ENCODE measurements at regions of chr2 and their contacts with region 1.

Region 1: GRCh38 chr2:32772638-32773447 is 145.0 kb downstream of the TTC27 start:
- DNase-seq: no peak
- ATAC-seq: peak; percentile 72 to 75

Region 2: DNA sequence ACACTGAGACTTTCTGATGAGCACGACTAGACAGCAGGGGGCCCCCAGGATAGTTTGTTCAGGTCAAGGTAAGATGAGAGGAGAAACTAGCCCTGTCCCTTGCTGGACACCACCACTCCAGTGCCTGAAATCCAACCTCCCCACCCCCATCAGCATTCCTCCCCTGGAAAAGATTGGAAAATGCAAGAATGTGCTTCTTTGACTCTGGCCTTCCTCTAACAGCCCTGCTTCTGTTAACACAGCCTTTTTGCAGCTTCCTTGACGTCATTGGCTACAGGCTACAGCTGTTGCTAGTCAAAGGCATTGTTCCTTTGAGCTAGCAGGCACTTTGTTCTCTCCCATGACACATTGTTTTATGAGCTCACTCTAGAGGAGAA is 153.9 kb after region 1 on chr2:
- intact Hi-C with region 1: no loop called
- DNase-seq: no peak
- ATAC-seq: peak in 1 of 2 donors; percentile 44

Region 3: GRCh38 chr2:32946314-32947075 is 173.7 kb after region 1 on chr2 and contains the start of gene LTBP1:
- intact Hi-C with region 1: loop called (anchors 5 kb)
- DNase-seq: peak; percentile 84
- ATAC-seq: peak; percentile 87 to 89
- total RNA-seq, gene LTBP1: 121 to 160 TPM

Region 4: GRCh38 chr2:33033606-33034081 is 260.8 kb after region 1 on chr2:
- intact Hi-C with region 1: loop called (anchors 2 to 10 kb)
- DNase-seq: no peak
- ATAC-seq: peak; percentile 59 to 67

Region 5: GRCh38 chr2:33177627-33178026 is 404.8 kb after region 1 on chr2:
- intact Hi-C with region 1: no loop called
- DNase-seq: no peak
- ATAC-seq: no peak

Region 6: GRCh38 chr2:33275689-33276444 is 503.0 kb after region 1 on chr2:
- intact Hi-C with region 1: loop called in 1 of 2 experiments (anchors 10 kb)
- DNase-seq: peak; percentile 75
- ATAC-seq: peak; percentile 81 to 89

Region 7: GRCh38 chr2:33583194-33583938 is 810.5 kb after region 1 on chr2:
- intact Hi-C with region 1: loop called in 1 of 2 experiments (anchors 10 kb)
- DNase-seq: no peak
- ATAC-seq: peak; percentile 49 to 67

Measured in left cardiac atrium (tissue), 4 donors.